ENCODE measurements at regions of chr19 and their contacts with region 1.

Region 1: DNA sequence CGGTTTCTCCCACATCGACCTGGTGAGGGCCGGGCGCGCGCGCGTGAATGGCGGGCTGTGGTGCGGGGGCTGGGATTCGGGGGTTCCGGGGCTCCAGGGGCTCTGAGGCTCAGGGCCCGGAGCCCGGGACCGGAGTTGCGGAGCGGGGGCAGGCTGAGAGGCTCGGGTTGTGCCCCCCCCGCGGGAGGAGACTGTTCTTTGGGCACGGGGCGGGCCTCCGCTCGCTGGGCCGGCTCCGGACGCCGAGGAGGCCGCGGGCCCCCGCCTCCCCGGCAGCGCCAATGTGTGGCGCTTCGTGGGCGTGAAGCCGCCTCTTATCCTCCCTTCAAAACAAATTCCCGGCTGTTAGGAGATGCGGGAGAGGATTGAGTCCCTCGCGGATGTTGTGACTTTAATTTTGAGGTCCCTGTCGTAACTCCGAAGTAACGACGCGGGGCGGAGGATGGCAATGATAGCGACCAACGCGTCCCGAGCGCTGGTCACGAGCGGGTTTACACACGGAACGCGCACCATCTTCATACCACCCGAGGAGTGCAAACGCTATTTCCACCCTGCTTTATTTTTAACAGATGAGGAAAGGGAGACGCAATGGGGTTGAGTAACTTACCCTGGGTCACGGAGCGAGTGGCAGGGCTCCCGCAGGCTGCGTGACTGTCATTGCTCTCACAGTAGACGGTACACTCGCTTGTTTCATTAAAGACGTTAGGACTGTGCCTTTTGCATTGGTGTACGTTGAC is 536 bp downstream of the UBA2 start:
- DNase-seq: peak; percentile 52 to 86
- ATAC-seq: peak; percentile 82 to 92 (median 88)
- H3K4me3 ChIP-seq: peak overlapping the region; percentile 97
- H3K27ac ChIP-seq: peak overlapping the region; percentile 99
- H3K4me1 ChIP-seq: peaks cover 36% of the 10 kb centered on the region
- H3K27me3 ChIP-seq: no peaks in the 10 kb centered on the region
- CTCF ChIP-seq: no peak

Region 2: DNA sequence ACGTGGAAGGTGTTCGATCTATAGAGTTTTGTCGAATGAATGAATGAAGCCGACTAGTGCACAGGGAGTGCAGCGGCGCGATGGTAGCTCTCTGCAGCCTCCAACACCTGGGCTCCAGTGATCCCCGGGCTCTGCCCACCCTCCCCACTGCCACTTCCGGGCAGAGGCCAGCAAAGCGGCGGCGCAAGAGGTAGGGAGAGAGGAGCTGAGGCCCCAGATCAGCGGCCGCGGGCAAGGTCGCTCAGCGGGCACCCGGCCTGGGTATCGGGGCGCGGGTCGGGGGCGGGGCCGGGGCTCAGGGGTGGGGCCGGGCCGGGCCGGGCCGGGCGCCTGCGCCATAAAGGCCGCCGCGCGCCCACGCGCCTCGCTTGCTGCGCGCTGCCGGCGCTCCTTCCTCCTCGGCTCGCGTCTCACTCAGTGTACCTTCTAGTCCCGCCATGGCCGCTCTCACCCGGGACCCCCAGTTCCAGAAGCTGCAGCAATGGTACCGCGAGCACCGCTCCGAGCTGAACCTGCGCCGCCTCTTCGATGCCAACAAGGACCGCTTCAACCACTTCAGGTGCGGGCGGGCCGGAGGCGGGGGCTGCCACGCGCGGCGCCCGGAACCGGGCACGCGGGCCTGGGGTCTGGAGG is 63.8 kb before region 1 on chr19 and contains the start of gene GPI:
- intact Hi-C with region 1: loop called in 1 of 2 experiments (anchors 5 kb)
- DNase-seq: peak; percentile 67 to 75
- ATAC-seq: peak; percentile 72 to 74 (median 72)
- H3K4me3 ChIP-seq: peak within 1 kb of the TSS; percentile 99
- H3K27ac ChIP-seq: peak within 1 kb of the TSS; percentile 91
- H3K4me1 ChIP-seq: peaks cover 35% of the 10 kb centered on the region
- H3K27me3 ChIP-seq: no peaks in the 10 kb centered on the region
- CTCF ChIP-seq: no peak
- total RNA-seq, gene GPI: 170 to 259 (median 255) TPM

Region 3: GRCh38 chr19:34540811-34541557 is 112.3 kb after region 1 on chr19:
- intact Hi-C with region 1: no loop called
- DNase-seq: no peak
- ATAC-seq: no peak
- H3K4me3 ChIP-seq: no peak overlapping the region
- H3K27ac ChIP-seq: no peak overlapping the region
- H3K4me1 ChIP-seq: no peaks in the 10 kb centered on the region
- H3K27me3 ChIP-seq: peaks cover 0 to under 1% (median 0%) of the 10 kb centered on the region in 3 donors
- CTCF ChIP-seq: no peak